ENCODE measurements at regions of chrX and their contacts with region 1.

Region 1: GRCh38 chrX:109890895-109891502 is 111.9 kb upstream of the TMEM164 start:
- DNase-seq: peak; percentile 13
- H3K4me3 Mint-ChIP-seq: no peak overlapping the region
- H3K27ac Mint-ChIP-seq: no peak overlapping the region
- H3K4me1 Mint-ChIP-seq: peaks cover 5% of the 10 kb centered on the region
- H3K27me3 Mint-ChIP-seq: peaks cover 3% of the 10 kb centered on the region

Region 2: DNA sequence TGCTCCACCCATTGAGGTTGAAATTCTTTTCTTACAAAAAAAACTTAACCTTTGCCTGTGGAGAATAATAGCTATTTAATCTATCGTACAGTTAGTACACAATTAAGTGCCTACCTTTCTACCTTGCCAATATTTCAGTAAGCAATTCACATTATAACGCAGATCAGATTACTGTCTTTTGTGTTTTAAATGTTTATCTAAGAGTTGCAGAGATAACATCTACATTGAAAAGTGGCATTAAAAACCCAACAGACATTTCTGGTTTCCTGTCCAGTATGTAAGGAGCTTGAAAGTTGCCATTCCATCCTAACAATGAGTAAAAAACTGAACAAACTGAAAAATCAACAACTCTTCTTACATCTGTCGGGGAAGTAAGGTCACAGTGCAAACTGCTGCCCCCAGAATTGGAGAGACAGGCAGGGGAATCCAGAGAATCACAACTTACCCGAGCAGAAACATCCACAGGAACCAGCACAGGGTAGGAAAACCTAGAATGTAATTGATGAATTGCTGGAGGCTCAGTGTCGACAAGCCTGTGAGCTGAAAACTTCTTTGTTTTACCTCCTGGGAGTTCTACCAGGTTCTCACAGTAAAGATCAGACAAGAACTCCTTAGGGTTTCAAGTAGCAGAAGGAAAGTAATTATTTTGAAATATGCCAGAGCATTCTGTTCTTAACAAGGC is 130.6 kb before region 1 on chrX:
- intact Hi-C with region 1: no loop called
- DNase-seq: no peak
- H3K4me3 Mint-ChIP-seq: no peak overlapping the region
- H3K27ac Mint-ChIP-seq: peak overlapping the region; percentile 72
- H3K4me1 Mint-ChIP-seq: peaks cover 18% of the 10 kb centered on the region
- H3K27me3 Mint-ChIP-seq: peaks cover 8% of the 10 kb centered on the region

Region 3: GRCh38 chrX:109934434-109934833 is 43.4 kb after region 1 on chrX:
- intact Hi-C with region 1: no loop called
- DNase-seq: no peak
- H3K4me3 Mint-ChIP-seq: no peak overlapping the region
- H3K27ac Mint-ChIP-seq: no peak overlapping the region
- H3K4me1 Mint-ChIP-seq: no peaks in the 10 kb centered on the region
- H3K27me3 Mint-ChIP-seq: peaks cover 14% of the 10 kb centered on the region

Region 4: DNA sequence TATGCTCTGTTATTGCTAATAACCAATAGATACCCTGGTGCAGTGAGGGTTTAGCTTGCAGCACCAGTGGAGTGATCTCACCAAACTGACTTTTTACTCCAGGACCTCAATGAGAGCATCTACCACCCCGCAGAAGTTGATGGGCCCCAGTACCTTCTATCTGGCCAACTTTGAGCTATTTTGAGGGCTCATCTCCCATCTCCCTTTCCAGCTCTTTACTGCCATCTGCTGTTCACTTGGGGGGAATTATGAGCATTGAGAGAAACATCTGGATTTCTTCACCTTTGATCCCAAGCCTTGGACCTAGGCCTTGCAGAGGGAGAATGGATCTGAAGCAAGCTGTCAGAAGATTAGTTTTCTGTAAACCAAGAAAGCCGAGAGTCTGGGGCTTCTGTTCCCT is 255.5 kb after region 1 on chrX:
- intact Hi-C with region 1: loop called (anchors 5 kb)
- DNase-seq: no peak
- H3K4me3 Mint-ChIP-seq: no peak overlapping the region
- H3K27ac Mint-ChIP-seq: no peak overlapping the region
- H3K4me1 Mint-ChIP-seq: peaks cover 3% of the 10 kb centered on the region
- H3K27me3 Mint-ChIP-seq: no peaks in the 10 kb centered on the region